Activated CD4-positive, alpha-beta memory T cell treated with anti-CD3 and anti-CD28 coated beads for 36 hours (primary cell): ENCODE measurements at regions of chr3 and their contacts with region 1.

Region 1: GRCh38 chr3:52820736-52821135 is 9.7 kb downstream of the ITIH4 start:
- DNase-seq: peak; percentile 40
- H3K4me3 Mint-ChIP-seq: no peak overlapping the region
- H3K27ac Mint-ChIP-seq: no peak overlapping the region
- H3K4me1 Mint-ChIP-seq: no peaks in the 10 kb centered on the region
- H3K27me3 Mint-ChIP-seq: no peaks in the 10 kb centered on the region

Region 2: DNA sequence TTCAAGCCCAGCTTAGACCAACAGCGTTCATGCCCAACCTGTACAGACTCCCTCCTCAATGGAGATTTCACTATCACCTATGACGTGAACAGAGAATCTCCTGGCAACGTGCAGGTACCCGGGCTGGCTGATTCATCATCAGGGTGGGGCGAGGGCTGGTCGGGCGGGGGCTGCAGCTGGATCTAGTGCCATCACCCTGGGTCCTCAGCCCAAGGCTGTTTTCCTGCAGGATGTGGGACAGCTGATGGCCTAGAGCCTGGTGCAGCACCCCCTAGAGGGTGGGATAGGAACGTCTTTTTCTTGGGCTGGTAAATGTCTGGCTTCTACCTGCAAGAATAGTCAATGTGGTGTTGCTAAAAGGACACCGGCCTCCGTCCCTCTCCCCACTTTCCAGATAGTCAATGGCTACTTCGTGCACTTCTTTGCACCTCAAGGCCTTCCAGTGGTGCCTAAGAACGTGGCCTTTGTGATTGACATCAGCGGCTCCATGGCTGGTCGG is 21.7 kb before region 1 on chr3:
- CTCF ChIA-PET with region 1: interaction called, 13 read pairs
- POLR2A ChIA-PET with region 1: no interaction called
- intact Hi-C with region 1: no loop called
- DNase-seq: peak; percentile 41
- H3K4me3 Mint-ChIP-seq: no peak overlapping the region
- H3K27ac Mint-ChIP-seq: no peak overlapping the region
- H3K4me1 Mint-ChIP-seq: no peaks in the 10 kb centered on the region
- H3K27me3 Mint-ChIP-seq: no peaks in the 10 kb centered on the region

Region 3: GRCh38 chr3:52838561-52839267 is 18.0 kb after region 1 on chr3:
- CTCF ChIA-PET with region 1: interaction called, 12 read pairs
- POLR2A ChIA-PET with region 1: no interaction called
- intact Hi-C with region 1: no loop called
- DNase-seq: peak; percentile 30
- H3K4me3 Mint-ChIP-seq: no peak overlapping the region
- H3K27ac Mint-ChIP-seq: no peak overlapping the region
- H3K4me1 Mint-ChIP-seq: peaks cover 24% of the 10 kb centered on the region
- H3K27me3 Mint-ChIP-seq: no peaks in the 10 kb centered on the region